Activated CD4-positive, alpha-beta T cell treated with anti-CD3 and anti-CD28 coated beads for 36 hours (primary cell): ENCODE measurements at regions of chr5 and their contacts with region 1.

Region 1: GRCh38 chr5:132238169-132238744 is 10.6 kb upstream of the P4HA2 start:
- DNase-seq: peak; percentile 89
- ATAC-seq: peak; percentile 95
- H3K4me3 Mint-ChIP-seq: no peak overlapping the region
- H3K27ac Mint-ChIP-seq: no peak overlapping the region
- H3K4me1 Mint-ChIP-seq: no peaks in the 10 kb centered on the region
- H3K27me3 Mint-ChIP-seq: peaks cover 6% of the 10 kb centered on the region

Region 2: GRCh38 chr5:132205385-132206125 is 32.7 kb before region 1 on chr5:
- CTCF ChIA-PET with region 1: interaction called, 12 read pairs
- POLR2A ChIA-PET with region 1: no interaction called
- intact Hi-C with region 1: no loop called
- DNase-seq: no peak
- ATAC-seq: no peak
- H3K4me3 Mint-ChIP-seq: no peak overlapping the region
- H3K27ac Mint-ChIP-seq: no peak overlapping the region
- H3K4me1 Mint-ChIP-seq: no peaks in the 10 kb centered on the region
- H3K27me3 Mint-ChIP-seq: no peaks in the 10 kb centered on the region

Region 3: GRCh38 chr5:132227485-132228240 is 10.6 kb before region 1 on chr5 and contains the start of gene P4HA2:
- CTCF ChIA-PET with region 1: interaction called, 28 read pairs
- POLR2A ChIA-PET with region 1: no interaction called
- intact Hi-C with region 1: no loop called
- DNase-seq: peak; percentile 70
- ATAC-seq: peak; percentile 84
- H3K4me3 Mint-ChIP-seq: peak within 1 kb of the TSS; percentile 54
- H3K27ac Mint-ChIP-seq: no peak within 1 kb of the TSS
- H3K4me1 Mint-ChIP-seq: peaks cover 14% of the 10 kb centered on the region
- H3K27me3 Mint-ChIP-seq: peaks cover 34% of the 10 kb centered on the region
- total RNA-seq, gene P4HA2: 6.1 to 8.9 TPM

Region 4: DNA sequence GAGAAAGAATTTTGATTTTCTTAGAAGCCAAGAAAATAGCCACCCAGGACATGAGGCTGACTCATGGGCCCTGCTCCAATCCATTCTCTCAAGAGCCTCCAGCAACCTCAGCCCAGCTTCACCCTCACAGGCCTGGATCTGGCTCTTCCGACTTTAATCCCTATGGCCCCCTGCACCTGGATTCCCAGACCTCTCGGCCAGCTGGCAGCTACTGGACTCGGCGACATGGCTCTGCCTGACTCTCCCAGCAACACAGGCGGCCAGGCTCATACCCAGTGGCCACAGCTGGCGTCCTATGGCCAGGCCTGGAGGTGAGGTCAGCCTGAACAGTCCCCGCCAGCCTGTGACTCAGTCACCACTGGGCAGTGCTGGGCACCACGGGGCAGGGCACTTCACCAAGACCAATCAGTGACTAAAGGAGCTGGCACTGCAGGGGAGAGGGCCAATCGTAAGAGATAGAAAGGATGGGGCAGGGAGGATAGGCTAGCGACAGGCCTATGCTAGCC is 13.0 kb after region 1 on chr5:
- CTCF ChIA-PET with region 1: interaction called, 48 read pairs
- POLR2A ChIA-PET with region 1: no interaction called
- intact Hi-C with region 1: no loop called
- DNase-seq: peak; percentile 1
- ATAC-seq: no peak
- H3K4me3 Mint-ChIP-seq: no peak overlapping the region
- H3K27ac Mint-ChIP-seq: no peak overlapping the region
- H3K4me1 Mint-ChIP-seq: no peaks in the 10 kb centered on the region
- H3K27me3 Mint-ChIP-seq: peaks cover 2% of the 10 kb centered on the region

Region 5: DNA sequence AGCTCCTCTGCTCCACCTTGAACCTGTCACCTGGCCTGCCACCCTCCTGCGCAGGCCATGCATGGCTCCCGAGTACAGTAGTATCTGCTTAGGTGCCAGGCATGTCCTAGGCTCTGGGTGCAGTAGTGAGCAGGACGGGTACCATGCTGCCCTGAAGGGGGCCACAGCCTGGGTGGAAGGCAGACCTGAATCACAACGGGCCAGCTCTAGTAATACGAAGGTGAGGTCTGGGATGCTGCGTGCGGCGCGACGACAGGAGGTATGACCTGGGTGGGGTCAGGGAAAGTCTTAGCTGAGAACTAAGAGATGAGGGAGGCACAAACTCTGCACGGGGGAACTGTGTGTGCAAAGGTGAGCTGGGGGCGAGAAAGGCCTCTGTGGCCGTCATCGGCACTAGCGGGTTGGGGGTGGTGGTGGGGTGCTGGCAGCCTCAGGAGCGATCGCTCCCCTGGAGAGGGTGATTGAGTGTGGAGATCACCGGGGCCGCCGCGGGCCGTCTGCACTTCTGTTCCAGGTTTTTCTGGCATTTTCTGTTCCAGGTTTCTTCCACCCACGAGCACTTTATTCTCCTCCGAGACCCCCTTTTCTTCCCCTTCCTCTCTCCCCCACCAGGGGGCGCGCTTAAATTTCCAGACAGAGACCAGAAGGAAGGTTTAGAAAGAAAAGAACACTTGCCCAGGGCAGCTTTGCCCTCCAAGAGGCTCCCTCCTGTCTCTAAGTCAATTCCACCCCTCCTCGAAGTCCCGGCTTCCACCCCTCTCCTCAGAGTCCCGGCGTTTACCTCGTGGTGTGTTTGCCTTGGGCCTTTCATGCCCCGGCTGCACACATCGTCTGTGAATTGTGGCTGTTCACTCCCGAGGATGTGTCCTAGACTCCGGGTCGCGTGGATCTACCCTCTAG is 34.3 kb after region 1 on chr5:
- CTCF ChIA-PET with region 1: interaction called, 19 read pairs
- POLR2A ChIA-PET with region 1: no interaction called
- intact Hi-C with region 1: no loop called
- DNase-seq: peak; percentile 85
- ATAC-seq: peak; percentile 42
- H3K4me3 Mint-ChIP-seq: no peak overlapping the region
- H3K27ac Mint-ChIP-seq: no peak overlapping the region
- H3K4me1 Mint-ChIP-seq: peaks cover 2% of the 10 kb centered on the region
- H3K27me3 Mint-ChIP-seq: peaks cover 18% of the 10 kb centered on the region

Region 6: GRCh38 chr5:132369474-132370180 is 131.4 kb after region 1 on chr5 and contains the start of gene SLC22A5:
- CTCF ChIA-PET with region 1: interaction called, 8 read pairs
- POLR2A ChIA-PET with region 1: no interaction called
- intact Hi-C with region 1: loop called in 1 of 2 experiments (anchors 2 kb)
- DNase-seq: peak; percentile 84
- ATAC-seq: peak; percentile 97
- H3K4me3 Mint-ChIP-seq: peak within 1 kb of the TSS; percentile 66
- H3K27ac Mint-ChIP-seq: peak within 1 kb of the TSS; percentile 80
- H3K4me1 Mint-ChIP-seq: peaks cover 24% of the 10 kb centered on the region
- H3K27me3 Mint-ChIP-seq: no peaks in the 10 kb centered on the region
- total RNA-seq, gene SLC22A5: 3.7 to 4.9 TPM